ENCODE measurements at regions of chr1 and their contacts with region 1.

Region 1: GRCh38 chr1:239898062-239898730 is 193.5 kb upstream of the FMN2 start:
- DNase-seq: peak; percentile 81
- ATAC-seq: peak; percentile 99
- H3K4me3 ChIP-seq: no peak overlapping the region
- H3K27ac ChIP-seq: no peak overlapping the region
- H3K4me1 ChIP-seq: peaks cover 5% of the 10 kb centered on the region
- H3K27me3 ChIP-seq: no peaks in the 10 kb centered on the region
- CTCF ChIP-seq: peak; percentile 94

Region 2: GRCh38 chr1:239413916-239414315 is 484.3 kb before region 1 on chr1:
- intact Hi-C with region 1: loop called (anchors 5 kb)
- DNase-seq: no peak
- ATAC-seq: no peak
- H3K4me3 ChIP-seq: no peak overlapping the region
- H3K27ac ChIP-seq: no peak overlapping the region
- H3K4me1 ChIP-seq: no peaks in the 10 kb centered on the region
- H3K27me3 ChIP-seq: no peaks in the 10 kb centered on the region
- CTCF ChIP-seq: no peak

Region 3: DNA sequence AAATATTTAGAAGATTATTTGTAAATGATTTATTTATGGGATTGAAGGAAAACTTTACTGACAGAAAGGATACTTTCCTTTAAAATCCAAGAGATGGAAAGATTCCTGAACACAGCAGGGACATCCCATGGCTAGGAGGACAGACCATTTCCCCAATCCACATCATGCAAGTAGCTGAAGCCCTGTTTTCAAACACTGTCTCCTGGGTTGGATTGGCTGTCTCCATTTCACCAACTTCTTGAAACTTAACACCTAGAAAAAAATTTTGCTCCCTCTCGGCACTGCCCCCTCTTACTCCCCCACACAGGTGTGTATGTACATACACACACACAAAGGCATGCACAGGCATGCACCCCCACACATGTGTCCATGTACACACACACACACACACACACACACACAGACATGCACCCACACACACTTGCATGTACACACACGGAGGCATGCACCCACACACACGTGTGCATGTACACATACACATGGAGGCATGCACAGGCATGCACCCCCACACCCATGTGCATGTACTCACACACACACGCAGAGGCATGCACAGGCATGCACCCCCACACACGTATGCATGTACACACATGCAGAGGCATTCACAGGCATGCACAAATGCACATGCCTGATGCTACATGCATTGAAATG is 191.8 kb before region 1 on chr1:
- intact Hi-C with region 1: no loop called
- DNase-seq: no peak
- ATAC-seq: peak; percentile 20
- H3K4me3 ChIP-seq: no peak overlapping the region
- H3K27ac ChIP-seq: no peak overlapping the region
- H3K4me1 ChIP-seq: no peaks in the 10 kb centered on the region
- H3K27me3 ChIP-seq: no peaks in the 10 kb centered on the region
- CTCF ChIP-seq: no peak

Region 4: DNA sequence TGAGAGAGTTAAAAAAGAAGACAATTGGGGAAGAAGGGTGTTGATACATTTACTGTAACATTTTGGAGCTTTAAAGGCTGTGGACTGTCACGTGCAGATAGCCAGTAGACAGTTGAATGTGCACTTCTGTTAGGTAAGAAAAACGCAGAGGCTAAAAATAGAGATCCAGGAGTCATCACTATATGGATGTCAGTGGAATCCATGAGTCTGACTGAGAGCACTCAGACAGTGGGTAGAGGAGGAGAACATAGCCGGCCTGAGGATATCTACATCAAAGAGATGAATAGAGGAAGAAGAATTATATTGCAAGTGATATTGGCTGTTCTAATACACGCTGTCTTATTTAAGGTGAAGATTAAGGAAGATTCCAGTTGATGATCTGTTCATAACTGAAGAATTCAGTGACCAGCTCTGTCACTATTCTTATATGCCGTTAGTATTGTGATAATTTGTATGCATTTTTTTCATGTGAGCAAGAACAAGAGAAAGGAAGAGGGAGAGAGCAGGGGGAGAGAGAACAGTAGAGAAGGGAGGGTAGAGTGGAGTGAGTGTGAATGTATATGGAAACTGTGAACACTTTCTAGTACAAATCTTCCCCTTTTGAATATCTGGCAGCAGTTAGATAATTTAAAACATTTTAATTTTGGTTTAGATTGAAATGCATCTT is 167.0 kb before region 1 on chr1:
- intact Hi-C with region 1: no loop called
- DNase-seq: no peak
- ATAC-seq: no peak
- H3K4me3 ChIP-seq: no peak overlapping the region
- H3K27ac ChIP-seq: no peak overlapping the region
- H3K4me1 ChIP-seq: no peaks in the 10 kb centered on the region
- H3K27me3 ChIP-seq: no peaks in the 10 kb centered on the region
- CTCF ChIP-seq: no peak

Measured in upper lobe of right lung (tissue), 1 donor.